Posterior cingulate gyrus (tissue), 11 donors: ENCODE measurements at regions of chr6 and their contacts with region 1.

Region 1: DNA sequence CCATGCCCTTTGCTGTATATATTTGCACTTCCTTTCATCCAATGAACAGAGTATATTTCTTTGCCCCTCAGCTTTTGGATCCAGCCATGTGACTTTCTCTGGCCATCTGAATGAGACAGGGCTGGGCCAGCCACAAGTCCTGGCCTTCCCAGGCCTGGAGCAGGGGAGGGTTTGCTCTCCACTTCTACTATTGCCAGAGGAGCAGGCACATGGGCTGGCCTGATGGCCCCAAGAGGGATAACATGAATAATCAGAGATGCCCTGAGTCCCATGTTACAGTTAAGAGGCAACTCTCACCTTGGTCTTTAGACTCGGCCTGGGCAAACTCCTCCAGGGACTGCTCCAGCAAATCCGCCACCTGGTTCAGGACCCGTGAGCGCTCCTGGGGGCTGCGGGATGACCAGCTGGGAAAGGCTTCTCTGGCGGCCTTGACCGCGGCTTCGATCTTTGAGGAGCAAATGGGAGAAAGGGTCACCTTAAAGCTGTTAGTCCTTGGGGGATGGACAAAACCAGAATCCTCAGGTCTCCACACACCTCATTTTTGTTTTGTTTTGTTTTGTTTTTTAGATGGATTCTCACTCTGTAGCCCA is 6.3 kb downstream of the ALDH8A1 start:
- DNase-seq: peak in 1 of 10 donors; percentile 63

Region 2: GRCh38 chr6:134161036-134161435 is 782.6 kb before region 1 on chr6:
- intact Hi-C with region 1: loop called (anchors 5 kb)
- DNase-seq: no peak

Region 3: GRCh38 chr6:134809132-134809531 is 134.5 kb before region 1 on chr6:
- intact Hi-C with region 1: no loop called
- DNase-seq: no peak

Region 4: GRCh38 chr6:135162678-135163439 is 219.2 kb after region 1 on chr6:
- intact Hi-C with region 1: no loop called
- DNase-seq: peak in 1 of 10 donors; percentile 50